ENCODE measurements at regions of chr5 and their contacts with region 1.

Region 1: DNA sequence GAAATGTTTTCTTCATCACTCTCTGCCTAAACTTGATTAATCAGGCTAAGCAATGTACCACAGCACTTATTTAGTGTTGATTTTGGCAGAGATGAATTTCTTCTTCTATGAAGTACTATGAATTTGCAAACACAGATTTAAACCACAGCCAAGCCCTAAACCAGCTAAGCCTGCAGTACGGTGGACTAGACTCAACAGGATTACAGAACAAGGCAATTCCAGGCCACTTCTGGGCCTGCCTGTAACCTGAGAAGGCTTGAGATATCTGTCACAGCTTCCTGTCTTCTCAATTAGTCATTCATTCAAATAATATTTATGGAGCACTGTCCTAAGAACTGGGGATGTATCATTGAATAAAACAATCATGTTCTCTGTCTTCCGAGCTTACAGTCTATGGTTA is 32.4 kb upstream of the CAST start:
- DNase-seq: peak; percentile 62 to 92
- H3K4me3 ChIP-seq: no peak overlapping the region
- H3K27ac ChIP-seq: peak overlapping the region; percentile 61
- H3K4me1 ChIP-seq: peaks cover 33% of the 10 kb centered on the region
- H3K27me3 ChIP-seq: no peaks in the 10 kb centered on the region
- CTCF ChIP-seq: no peak

Region 2: DNA sequence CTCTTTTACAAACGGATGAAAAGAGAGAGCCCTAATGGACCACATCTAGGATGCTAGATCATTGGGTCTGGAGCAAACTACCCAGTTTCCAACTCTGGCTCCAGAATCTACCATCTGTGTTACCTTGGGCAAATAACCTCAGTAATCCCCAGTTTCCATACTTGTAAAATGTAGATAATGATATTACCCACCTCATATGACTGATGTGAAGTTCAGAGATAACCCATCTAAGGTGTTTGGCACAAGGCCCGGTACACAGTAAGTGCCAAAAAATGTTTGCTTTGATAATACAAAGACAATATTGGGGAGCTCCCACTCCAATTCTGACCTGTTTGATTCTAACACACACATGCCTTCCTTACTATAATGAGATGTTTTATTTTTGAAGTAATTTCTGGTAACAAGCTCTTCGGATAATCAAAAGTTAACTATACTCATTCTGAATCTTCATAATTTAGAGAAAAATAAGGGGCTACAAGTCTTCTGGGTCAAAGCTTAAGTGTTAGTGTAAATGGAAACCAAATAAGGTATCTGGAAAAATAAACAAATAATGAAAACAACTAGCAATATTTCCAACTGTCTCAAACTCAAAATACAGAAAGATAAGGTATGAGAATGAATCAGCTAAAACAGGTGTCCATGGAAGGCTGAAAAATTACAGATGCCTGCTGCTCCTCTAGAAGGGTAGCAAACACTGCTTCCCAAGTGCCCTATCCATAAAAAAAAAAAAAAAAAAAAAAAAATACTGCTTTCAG is 698.5 kb before region 1 on chr5:
- CTCF ChIA-PET with region 1: no interaction called
- POLR2A ChIA-PET with region 1: interaction called, 14 read pairs
- intact Hi-C with region 1: no loop called
- DNase-seq: no peak
- H3K4me3 ChIP-seq: no peak overlapping the region
- H3K27ac ChIP-seq: no peak overlapping the region
- H3K4me1 ChIP-seq: no peaks in the 10 kb centered on the region
- H3K27me3 ChIP-seq: no peaks in the 10 kb centered on the region
- CTCF ChIP-seq: no peak

Region 3: GRCh38 chr5:96651948-96652753 is 22.4 kb after region 1 on chr5:
- CTCF ChIA-PET with region 1: no interaction called
- POLR2A ChIA-PET with region 1: interaction called, 5 read pairs
- intact Hi-C with region 1: loop called (anchors 2 kb)
- DNase-seq: peak in 1 of 2 experiments; percentile 18
- H3K4me3 ChIP-seq: peak overlapping the region; percentile 11; the same call in 1 of the 2 replicates
- H3K27ac ChIP-seq: peak overlapping the region; percentile 90
- H3K4me1 ChIP-seq: peaks cover 81% of the 10 kb centered on the region
- H3K27me3 ChIP-seq: no peaks in the 10 kb centered on the region
- CTCF ChIP-seq: peak; percentile 47; the same call in 1 of the 2 replicates